Activated T-helper 2 cell treated with anti-CD3 and anti-CD28 coated beads, Interferon-gamma antibody, Interleukin-2, Interleukin-4, amounts not matched to agents 10 μg/mL and 5 μg/mL and 100 μg/mL, durations not matched to agents 14 hours and 24 hours and 36 hours (primary cell): ENCODE measurements at regions of chr10 and their contacts with region 1.

Region 1: DNA sequence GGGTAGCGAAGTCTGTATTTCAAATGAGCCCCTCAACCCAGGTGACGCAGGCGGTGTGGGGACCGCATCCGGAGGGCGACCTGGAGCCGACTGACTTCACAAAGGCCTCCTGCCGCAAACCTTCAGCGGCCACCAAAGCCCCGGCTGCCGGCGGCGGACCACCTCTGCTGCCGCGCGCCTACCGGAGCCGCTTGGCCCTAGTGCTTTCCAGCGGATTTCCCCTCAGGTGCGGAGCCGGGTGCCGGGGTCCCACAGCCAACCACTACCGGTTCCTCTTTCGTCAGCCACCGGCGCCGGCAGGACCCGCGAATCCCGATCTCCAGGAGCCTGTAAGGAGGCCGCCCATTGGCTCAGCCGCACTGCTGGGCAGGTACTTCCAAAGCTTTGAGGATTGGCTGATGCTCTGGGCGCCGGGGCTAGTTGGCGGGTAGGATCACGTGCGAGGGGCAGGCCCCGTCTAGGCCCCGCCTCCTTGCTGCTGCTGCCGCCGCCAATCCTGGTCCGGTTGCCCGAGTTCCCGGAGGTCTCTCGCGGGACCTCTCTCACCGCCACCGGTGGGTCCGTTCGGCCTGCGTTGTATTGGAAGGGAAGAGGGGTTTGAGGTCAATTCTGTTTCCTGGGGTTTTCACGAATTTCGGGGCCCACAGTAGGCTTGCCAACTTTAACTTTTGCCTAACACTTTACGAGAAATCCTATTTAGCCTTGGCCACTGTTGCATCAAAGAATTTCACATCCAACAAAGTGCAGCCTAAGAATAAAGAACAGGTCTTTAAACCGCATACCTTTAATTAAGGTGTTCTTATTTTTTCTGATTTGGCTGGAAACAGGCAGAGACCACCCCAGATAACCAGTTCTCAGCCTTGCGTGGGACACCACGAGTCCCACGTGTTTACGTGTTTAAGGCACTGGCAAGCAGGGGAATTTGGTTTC is at the start of gene GSTO2:
- DNase-seq: peak; percentile 98
- H3K4me3 Mint-ChIP-seq: peak within 1 kb of the TSS; percentile 92
- H3K27ac Mint-ChIP-seq: peak within 1 kb of the TSS; percentile 92
- H3K4me1 Mint-ChIP-seq: peaks cover 36% of the 10 kb centered on the region
- H3K27me3 Mint-ChIP-seq: no peaks in the 10 kb centered on the region
- total RNA-seq, gene GSTO2: 0.57 and 1.4 TPM in 2 replicates

Region 2: DNA sequence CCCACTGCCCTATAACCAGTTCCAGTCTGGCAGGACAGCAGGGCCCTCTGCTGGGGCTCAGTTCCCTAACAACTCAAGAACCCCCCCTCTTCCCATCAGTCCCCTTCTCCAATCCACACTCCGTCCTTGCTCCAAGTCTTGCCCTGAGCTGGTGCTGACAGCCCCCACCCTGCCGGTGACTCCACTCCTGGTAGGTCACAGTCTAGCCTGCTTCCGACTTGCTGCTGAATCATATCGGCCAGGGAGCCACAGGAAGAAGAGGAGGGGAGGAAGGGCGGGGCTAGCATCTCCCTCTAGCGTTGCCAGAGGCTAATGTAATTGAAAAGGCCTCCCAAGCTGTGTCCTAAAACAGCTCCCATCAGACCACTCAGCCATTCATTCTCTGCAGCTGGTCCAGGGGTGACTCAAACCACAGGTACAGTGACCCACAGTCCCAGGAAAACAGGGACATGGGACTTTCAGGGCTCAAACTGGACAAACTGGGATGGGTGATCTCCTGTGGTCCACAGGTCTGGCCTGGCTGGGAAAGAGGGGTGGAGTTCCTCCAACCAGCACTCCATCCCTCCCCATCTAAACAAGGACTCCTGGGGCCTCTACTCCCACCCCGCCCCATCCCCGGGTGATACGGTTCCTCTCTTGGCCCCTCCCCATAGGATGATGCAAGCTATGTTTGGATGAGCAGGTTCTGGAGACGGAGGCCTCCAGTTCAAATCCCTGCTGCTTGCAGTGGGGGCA is 572.4 kb before region 1 on chr10:
- intact Hi-C with region 1: loop called (anchors 10 kb)
- DNase-seq: peak; percentile 74
- H3K4me3 Mint-ChIP-seq: peak overlapping the region; percentile 57
- H3K27ac Mint-ChIP-seq: peak overlapping the region; percentile 79
- H3K4me1 Mint-ChIP-seq: peaks cover 31% of the 10 kb centered on the region
- H3K27me3 Mint-ChIP-seq: no peaks in the 10 kb centered on the region

Region 3: GRCh38 chr10:104231784-104232612 is 37.0 kb before region 1 on chr10 and contains the start of gene CFAP43:
- intact Hi-C with region 1: loop called (anchors 1 kb)
- DNase-seq: peak; percentile 98
- H3K4me3 Mint-ChIP-seq: peak within 1 kb of the TSS; percentile 85
- H3K27ac Mint-ChIP-seq: peak within 1 kb of the TSS; percentile 58
- H3K4me1 Mint-ChIP-seq: peaks cover 14% of the 10 kb centered on the region
- H3K27me3 Mint-ChIP-seq: peaks cover 40% of the 10 kb centered on the region
- total RNA-seq, gene CFAP43: 0.07 TPM in 1 of 2 replicates, not detected in the other

Region 4: GRCh38 chr10:104328896-104329710 is 60.1 kb after region 1 on chr10:
- intact Hi-C with region 1: loop called (anchors 1 kb)
- DNase-seq: peak; percentile 44
- H3K4me3 Mint-ChIP-seq: peak overlapping the region; percentile 68
- H3K27ac Mint-ChIP-seq: peak overlapping the region; percentile 90
- H3K4me1 Mint-ChIP-seq: peaks cover 91% of the 10 kb centered on the region
- H3K27me3 Mint-ChIP-seq: no peaks in the 10 kb centered on the region

Region 5: DNA sequence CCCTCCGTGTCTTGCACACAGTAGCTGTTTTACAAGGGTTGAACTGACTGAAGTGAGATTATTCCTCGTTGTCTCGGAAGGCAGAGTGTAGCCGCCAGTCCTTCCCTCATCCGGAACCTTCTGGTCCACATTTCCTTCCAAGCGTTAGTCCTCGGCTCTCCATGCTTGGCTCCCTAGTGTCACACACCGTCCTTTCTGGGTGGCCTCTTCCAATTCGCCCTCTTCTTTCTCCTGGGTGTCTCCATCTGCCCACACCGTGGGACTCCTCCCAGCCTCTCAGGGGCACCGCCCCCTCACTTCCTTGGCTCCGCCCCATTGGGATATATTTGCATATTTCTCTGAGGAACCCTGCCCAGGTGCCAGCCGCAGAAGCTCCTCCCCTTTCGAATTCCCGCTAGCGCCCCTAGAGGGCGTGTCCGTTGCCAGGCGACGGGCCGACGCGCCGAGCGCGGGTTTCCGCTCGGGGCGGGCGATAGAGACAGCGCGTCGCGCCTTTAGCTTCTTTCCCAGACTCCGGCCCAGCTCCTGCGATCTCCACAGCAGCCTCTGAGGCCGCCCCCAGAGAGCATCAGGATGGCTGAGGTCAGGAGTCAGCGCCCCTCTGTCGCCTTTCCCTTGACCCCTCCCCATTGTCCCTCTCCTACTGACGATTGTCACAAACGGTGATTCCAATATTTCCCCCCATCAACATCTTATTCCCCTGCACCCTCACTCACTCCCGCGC is 84.5 kb after region 1 on chr10 and contains the start of gene CFAP58:
- intact Hi-C with region 1: loop called (anchors 1 kb)
- DNase-seq: peak; percentile 87
- H3K4me3 Mint-ChIP-seq: peak within 1 kb of the TSS; percentile 64
- H3K27ac Mint-ChIP-seq: peak within 1 kb of the TSS; percentile 56
- H3K4me1 Mint-ChIP-seq: peaks cover 13% of the 10 kb centered on the region
- H3K27me3 Mint-ChIP-seq: no peaks in the 10 kb centered on the region
- total RNA-seq, gene CFAP58: 0.57 and 1.1 TPM in 2 replicates